ENCODE measurements at regions of chr17 and their contacts with region 1.

Region 1: GRCh38 chr17:44044067-44044466 is 22.4 kb downstream of the LSM12 start:
- DNase-seq: no peak
- ATAC-seq: no peak
- H3K4me3 Mint-ChIP-seq: no peak overlapping the region
- H3K27ac Mint-ChIP-seq: no peak overlapping the region
- H3K4me1 Mint-ChIP-seq: peaks cover 26% of the 10 kb centered on the region
- H3K27me3 Mint-ChIP-seq: no peaks in the 10 kb centered on the region

Region 2: DNA sequence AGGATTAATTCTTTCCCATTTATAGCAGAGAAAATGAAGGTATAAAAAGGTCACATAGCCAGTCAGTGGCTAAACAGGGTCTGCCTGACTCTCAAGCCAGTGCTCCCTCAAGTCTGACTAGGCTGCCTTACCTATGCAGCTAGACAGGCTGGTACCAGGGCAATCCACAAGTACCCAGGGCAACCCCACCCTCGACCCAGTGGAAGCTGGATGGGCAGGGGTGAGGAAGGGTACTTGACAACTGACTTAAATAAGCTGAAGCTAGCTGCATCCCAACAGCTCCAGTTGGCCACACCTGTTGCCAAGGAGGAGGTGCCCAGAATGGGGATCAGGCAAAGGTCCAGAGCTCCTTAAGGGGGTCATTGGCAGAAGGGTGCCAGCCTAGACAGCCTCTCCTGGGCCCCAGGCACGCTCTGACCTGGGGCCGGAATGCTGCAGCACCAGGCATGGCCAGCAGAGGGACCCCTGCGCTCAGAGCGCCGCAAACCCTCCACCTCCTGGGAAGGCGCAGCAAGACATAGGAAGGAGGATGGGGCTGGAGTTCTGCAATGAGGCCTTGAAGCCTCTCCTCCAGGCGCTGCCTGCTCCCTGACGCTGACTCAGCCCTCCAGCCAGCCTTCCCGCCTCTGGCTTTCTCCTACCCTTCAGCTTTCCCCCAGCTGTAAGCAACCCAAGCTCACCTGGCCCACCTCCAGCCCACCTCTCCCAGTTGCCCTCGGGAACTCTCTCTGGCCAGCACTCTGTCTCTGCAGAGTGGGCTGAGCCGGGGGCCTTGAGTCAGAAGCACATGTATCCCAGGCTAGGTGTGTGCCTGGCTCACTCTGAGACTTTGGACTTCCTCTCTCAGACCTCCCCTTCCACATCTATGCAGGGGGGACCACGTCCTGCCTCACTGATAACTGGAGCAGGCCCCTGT is 165.5 kb before region 1 on chr17:
- CTCF ChIA-PET with region 1: interaction called, 27 read pairs
- DNase-seq: peak; percentile 64
- ATAC-seq: peak; percentile 85
- H3K4me3 Mint-ChIP-seq: no peak overlapping the region
- H3K27ac Mint-ChIP-seq: no peak overlapping the region
- H3K4me1 Mint-ChIP-seq: no peaks in the 10 kb centered on the region
- H3K27me3 Mint-ChIP-seq: peaks cover 4% of the 10 kb centered on the region

Region 3: DNA sequence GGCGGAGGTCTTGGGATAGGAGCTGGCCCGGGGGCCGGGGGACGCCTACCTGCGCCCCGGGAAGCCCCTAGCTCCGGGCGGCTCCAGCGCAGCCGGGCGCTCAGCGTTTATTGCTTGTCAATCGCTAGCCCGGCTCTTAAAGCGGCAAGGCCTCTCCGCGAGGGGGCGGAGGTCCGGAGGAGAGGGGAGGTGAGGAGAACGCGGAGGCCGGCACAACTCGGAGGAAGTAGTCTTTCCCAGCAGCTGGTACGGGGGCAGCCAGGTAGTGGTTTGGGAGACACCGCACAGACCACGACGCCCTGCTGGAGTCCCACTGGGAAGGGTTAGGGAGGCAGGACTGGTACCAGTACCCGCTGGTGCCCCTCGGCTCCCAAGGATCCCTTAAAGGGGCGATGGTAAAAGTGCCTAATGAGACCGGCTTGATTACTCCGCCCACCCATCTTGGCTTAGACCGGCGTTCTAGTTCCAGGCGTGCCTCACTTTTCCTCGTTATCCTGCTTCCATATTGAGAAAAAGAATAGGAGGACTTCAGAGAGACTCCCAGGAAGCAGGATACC is 136.6 kb before region 1 on chr17 and contains the start of gene MPP2:
- CTCF ChIA-PET with region 1: interaction called, 13 read pairs
- DNase-seq: peak; percentile 46
- ATAC-seq: peak; percentile 32
- H3K4me3 Mint-ChIP-seq: no peak within 1 kb of the TSS
- H3K27ac Mint-ChIP-seq: no peak within 1 kb of the TSS
- H3K4me1 Mint-ChIP-seq: peaks cover 7% of the 10 kb centered on the region
- H3K27me3 Mint-ChIP-seq: peaks cover 59% of the 10 kb centered on the region
- total RNA-seq, gene MPP2: 0.56 to 0.61 TPM

Region 4: GRCh38 chr17:43940630-43941029 is 103.4 kb before region 1 on chr17:
- CTCF ChIA-PET with region 1: interaction called, 51 read pairs
- DNase-seq: no peak
- ATAC-seq: no peak
- H3K4me3 Mint-ChIP-seq: no peak overlapping the region
- H3K27ac Mint-ChIP-seq: no peak overlapping the region
- H3K4me1 Mint-ChIP-seq: peaks cover 12% of the 10 kb centered on the region
- H3K27me3 Mint-ChIP-seq: peaks cover 29% of the 10 kb centered on the region

Region 5: GRCh38 chr17:44024271-44024663 is 19.8 kb before region 1 on chr17:
- CTCF ChIA-PET with region 1: interaction called, 14 read pairs
- DNase-seq: no peak
- ATAC-seq: no peak
- H3K4me3 Mint-ChIP-seq: no peak overlapping the region
- H3K27ac Mint-ChIP-seq: no peak overlapping the region
- H3K4me1 Mint-ChIP-seq: peaks cover 4% of the 10 kb centered on the region
- H3K27me3 Mint-ChIP-seq: no peaks in the 10 kb centered on the region

Region 6: GRCh38 chr17:44029736-44030135 is 14.3 kb before region 1 on chr17:
- CTCF ChIA-PET with region 1: interaction called, 14 read pairs
- DNase-seq: no peak
- ATAC-seq: no peak
- H3K4me3 Mint-ChIP-seq: no peak overlapping the region
- H3K27ac Mint-ChIP-seq: no peak overlapping the region
- H3K4me1 Mint-ChIP-seq: peaks cover 20% of the 10 kb centered on the region
- H3K27me3 Mint-ChIP-seq: no peaks in the 10 kb centered on the region

Measured in activated CD8-positive, alpha-beta memory T cell treated with anti-CD3 and anti-CD28 coated beads, Interleukin-2, amount 10 ng/mL, durations not matched to agents 7 days and 5 days (primary cell).